Activated B cell treated with CpG ODN at 0.5 μM for 24 hours (primary cell): ENCODE measurements at regions of chr4 and their contacts with region 1.

Region 1: GRCh38 chr4:51831133-51831532 is 11.8 kb upstream of the DCUN1D4 start:
- DNase-seq: peak; percentile 34
- ATAC-seq: peak; percentile 61
- H3K4me3 Mint-ChIP-seq: no peak overlapping the region
- H3K27ac Mint-ChIP-seq: no peak overlapping the region
- H3K4me1 Mint-ChIP-seq: no peaks in the 10 kb centered on the region
- H3K27me3 Mint-ChIP-seq: peaks cover 16% of the 10 kb centered on the region
- CTCF ChIP-seq: no peak

Region 2: DNA sequence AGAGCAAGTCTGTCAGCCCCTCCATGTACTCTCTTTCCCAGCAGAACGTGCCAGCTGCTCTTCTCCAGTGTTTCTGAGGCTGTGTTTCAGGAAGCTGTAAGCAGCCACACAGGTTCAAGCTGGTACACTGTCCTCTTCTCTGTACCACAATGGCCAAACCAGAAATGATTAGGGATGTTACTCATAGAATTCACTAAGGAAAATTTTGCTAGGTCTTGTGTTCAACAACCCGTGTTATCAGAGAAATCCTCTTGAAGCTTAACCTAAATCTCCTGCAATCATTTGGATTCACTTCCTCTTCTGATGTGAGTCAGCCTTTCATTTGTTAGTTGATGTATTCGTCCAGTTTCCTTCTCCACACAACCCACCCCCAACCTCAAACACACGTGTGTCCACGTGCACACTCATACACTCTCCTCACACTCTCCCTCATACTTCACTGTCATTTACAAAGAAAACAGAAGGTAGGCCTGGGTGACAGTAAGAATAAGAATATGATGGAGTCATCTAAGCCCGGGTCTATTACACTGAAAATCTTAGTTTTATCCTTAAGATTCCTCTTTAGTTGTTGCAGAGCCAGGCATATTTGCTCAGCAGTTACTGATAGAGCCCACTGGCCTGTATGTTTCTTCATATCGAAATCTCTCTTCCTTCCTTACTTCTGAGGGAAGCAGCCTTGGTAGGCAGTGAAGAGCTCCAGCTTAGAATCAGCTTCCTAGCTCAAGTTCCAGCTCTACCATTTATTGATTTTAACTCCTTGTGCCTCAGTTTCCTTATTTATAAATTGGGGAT is 75.2 kb after region 1 on chr4:
- CTCF ChIA-PET with region 1: no interaction called
- POLR2A ChIA-PET with region 1: no interaction called
- intact Hi-C with region 1: no loop called
- DNase-seq: no peak
- ATAC-seq: peak; percentile 92
- H3K4me3 Mint-ChIP-seq: no peak overlapping the region
- H3K27ac Mint-ChIP-seq: peak overlapping the region; percentile 51
- H3K4me1 Mint-ChIP-seq: peaks cover 13% of the 10 kb centered on the region
- H3K27me3 Mint-ChIP-seq: no peaks in the 10 kb centered on the region
- CTCF ChIP-seq: no peak

Region 3: DNA sequence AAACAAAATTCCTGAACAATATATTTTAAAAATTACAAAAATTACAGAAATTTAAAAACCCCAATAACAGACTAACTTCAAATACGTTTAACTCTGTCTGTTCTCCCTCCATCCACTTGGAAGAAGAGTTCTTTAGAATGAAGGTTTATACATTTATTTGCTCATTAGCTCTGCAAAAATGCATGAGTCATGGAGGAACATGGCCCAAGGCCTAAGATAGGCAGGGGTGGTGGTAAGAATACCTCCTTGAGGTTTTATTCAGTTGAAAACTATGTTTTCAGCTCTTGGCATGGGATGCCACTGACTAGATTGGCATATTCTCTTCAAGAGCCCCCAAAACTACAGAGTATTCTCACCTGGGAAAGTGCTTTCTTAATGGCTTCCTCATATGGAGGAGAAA is 197.8 kb after region 1 on chr4:
- CTCF ChIA-PET with region 1: interaction called, 3 read pairs
- POLR2A ChIA-PET with region 1: no interaction called
- intact Hi-C with region 1: loop called (anchors 1 kb)
- DNase-seq: no peak
- ATAC-seq: no peak
- H3K4me3 Mint-ChIP-seq: no peak overlapping the region
- H3K27ac Mint-ChIP-seq: no peak overlapping the region
- H3K4me1 Mint-ChIP-seq: no peaks in the 10 kb centered on the region
- H3K27me3 Mint-ChIP-seq: no peaks in the 10 kb centered on the region
- CTCF ChIP-seq: no peak